ENCODE measurements at regions of chr12 and their contacts with region 1.

Region 1: DNA sequence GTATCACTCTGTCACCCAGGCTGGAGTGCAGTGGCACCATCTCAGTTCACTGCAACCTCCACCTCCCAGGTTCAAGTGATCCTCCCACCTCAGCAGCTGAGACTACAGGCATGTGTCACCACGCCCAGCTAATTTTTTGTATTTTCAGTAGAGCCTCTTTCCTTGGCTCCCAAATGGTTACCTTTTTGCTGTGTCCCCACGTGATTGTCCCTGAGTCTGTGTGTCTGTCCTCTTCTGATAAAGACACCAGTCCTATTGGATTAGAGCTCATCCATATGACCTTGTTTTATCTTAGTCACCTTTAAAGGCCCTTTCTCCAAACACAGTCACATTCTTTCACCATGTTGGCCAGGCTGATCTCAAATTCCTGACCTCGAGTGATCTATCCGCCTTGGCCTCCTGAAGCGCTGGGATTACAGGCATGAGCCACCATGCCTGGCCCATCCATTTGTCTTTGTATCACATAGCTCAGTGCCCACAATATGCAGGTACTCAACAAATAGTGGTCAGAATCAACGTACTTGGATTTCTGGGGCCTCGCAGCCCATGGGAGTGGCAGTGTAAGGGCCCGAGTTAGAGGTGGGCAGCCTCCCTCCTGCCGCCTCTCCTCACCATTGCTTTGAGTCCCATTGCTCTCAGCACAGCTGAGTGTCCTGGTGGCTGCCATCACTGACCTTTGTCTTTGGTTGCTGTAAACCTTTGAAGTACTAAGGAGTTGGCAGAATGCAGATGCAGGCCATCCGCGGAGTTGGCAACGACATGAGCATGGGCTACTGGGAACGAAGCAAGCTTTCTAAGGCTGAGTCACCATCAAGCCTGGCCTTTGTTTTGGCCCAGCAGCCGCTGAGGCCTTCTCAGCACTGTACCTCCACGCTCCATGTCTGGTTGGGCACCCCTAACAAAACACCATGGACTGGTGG is 9.3 kb downstream of the TPCN1 start:
- DNase-seq: no peak
- H3K4me3 ChIP-seq: no peak overlapping the region
- H3K27ac ChIP-seq: no peak overlapping the region
- H3K4me1 ChIP-seq: peaks cover 14% of the 10 kb centered on the region
- H3K27me3 ChIP-seq: no peaks in the 10 kb centered on the region
- CTCF ChIP-seq: no peak

Region 2: DNA sequence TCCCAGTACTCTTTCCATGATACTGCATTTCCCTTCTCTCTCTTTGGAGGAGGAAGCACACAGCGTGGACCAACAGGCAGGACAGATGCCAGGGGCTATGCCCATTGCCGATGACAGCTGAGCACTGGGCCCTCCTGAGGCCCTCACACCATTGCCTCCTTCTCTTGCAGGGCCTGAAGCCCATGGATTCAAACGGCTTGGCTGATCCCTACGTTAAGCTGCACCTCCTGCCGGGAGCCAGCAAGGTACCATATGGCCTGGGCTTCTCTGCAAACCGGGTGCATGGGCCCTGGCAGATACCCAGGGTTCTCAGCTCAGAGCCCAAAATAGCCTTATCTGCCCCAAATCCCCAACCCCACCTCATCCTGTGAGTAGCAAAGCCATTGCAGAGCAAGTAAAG is 349.0 kb before region 1 on chr12:
- CTCF ChIA-PET with region 1: no interaction called
- POLR2A ChIA-PET with region 1: no interaction called
- intact Hi-C with region 1: no loop called
- DNase-seq: no peak
- H3K4me3 ChIP-seq: no peak overlapping the region
- H3K27ac ChIP-seq: no peak overlapping the region
- H3K4me1 ChIP-seq: no peaks in the 10 kb centered on the region
- H3K27me3 ChIP-seq: no peaks in the 10 kb centered on the region
- CTCF ChIP-seq: no peak

Region 3: GRCh38 chr12:113879658-113880057 is 649.1 kb after region 1 on chr12:
- CTCF ChIA-PET with region 1: no interaction called
- POLR2A ChIA-PET with region 1: interaction called, 16 read pairs
- intact Hi-C with region 1: no loop called
- DNase-seq: no peak
- H3K4me3 ChIP-seq: no peak overlapping the region
- H3K27ac ChIP-seq: no peak overlapping the region
- H3K4me1 ChIP-seq: no peaks in the 10 kb centered on the region
- H3K27me3 ChIP-seq: no peaks in the 10 kb centered on the region
- CTCF ChIP-seq: no peak

Measured in A673 (cell line).